ENCODE measurements at regions of chr2 and their contacts with region 1.

Region 1: DNA sequence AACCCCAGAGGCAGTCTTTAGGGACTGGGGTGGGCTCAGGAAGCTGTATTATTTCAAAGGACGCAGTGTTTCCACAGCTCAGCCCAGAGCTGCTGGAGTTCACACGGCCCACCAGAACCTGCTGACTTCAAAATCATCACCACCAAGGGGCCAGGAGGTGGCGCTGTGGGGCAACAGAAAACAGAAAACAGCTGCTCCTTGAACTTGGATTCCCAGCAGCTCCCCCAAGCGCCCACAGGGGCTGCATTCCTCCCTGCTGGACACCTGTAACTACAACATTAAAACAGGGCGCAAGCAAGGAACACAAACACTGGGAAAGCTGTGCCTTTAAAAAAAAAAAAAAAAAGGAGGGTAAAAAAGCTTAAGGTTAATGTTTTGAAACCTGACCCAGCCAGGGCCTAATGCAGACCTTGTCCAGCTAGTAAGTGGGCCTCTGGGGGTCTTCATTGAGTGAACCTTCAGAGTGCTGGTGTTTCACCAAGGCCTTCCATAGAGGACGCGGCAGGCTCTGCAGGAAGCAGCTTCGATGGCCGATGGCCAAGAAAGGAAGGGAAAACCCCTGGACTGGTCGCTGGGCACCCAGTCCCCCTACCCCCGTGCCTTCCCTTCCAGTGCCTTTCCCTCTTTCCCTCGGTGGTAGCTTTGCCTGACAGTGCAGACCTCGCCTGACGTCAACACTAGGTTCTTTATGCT is 25.9 kb downstream of the MLPH start:
- DNase-seq: peak; percentile 87
- H3K4me3 ChIP-seq: no peak overlapping the region
- H3K27ac ChIP-seq: no peak overlapping the region
- H3K4me1 ChIP-seq: peaks cover 9% of the 10 kb centered on the region
- H3K27me3 ChIP-seq: peaks cover 0 to 1% of the 10 kb centered on the region in 2 experiments
- CTCF ChIP-seq: peak; percentile 91 to 92
- POLR2A ChIP-seq: no peak

Region 2: GRCh38 chr2:237154082-237154638 is 358.8 kb before region 1 on chr2:
- CTCF ChIA-PET with region 1: interaction called, 12 read pairs
- POLR2A ChIA-PET with region 1: no interaction called
- dilution Hi-C with region 1: no loop called
- intact Hi-C with region 1: loop called (anchors 1 kb)
- DNase-seq: peak; percentile 59
- H3K4me3 ChIP-seq: no peak overlapping the region
- H3K27ac ChIP-seq: no peak overlapping the region
- H3K4me1 ChIP-seq: peaks cover 8% of the 10 kb centered on the region
- H3K27me3 ChIP-seq: no peaks in the 10 kb centered on the region
- CTCF ChIP-seq: peak; percentile 73 to 75
- POLR2A ChIP-seq: no peak

Region 3: DNA sequence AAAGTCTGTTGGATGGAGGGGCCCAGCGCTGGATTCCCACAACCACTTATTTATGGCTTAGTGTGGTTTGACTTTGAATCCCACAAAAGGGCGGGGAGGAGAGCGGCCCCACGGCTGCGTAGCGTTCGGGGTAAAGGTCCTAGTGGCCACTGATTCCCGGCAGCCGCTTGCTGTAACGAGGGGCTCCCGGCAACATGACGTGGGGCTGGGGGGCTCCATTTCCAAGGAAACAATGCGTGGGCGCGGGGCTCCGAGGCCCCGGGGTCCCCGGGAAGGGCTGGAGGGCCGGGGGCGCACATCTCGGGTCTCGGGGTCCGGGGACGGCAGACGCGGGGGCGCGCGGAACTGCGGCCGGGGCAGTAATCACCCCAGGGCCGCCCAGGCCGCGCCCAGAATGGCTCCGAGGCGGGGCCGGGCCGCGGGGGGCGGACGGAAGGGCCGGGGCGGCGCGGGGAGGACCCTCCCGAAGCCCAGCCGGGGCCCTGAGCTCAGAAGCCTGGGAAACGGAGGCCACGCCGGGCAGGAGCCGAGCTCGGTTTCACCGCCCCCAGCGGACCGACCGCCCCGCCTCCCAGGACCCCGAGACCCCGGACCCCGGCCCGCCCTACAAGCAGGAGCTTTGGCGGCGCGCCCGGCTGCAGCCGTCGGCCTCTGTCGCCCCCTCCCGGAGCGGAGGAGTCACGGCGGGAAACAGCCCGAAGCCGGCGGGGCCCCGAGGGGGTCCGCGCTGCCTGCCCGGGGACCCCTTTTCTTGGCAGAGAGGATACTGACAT is 37.8 kb before region 1 on chr2:
- CTCF ChIA-PET with region 1: interaction called, 78 read pairs
- POLR2A ChIA-PET with region 1: interaction called, 6 read pairs
- dilution Hi-C with region 1: no loop called
- intact Hi-C with region 1: loop called (anchors 1 kb)
- DNase-seq: peak; percentile 54
- H3K4me3 ChIP-seq: peak overlapping the region; percentile 38 to 51 (median 40)
- H3K27ac ChIP-seq: peak overlapping the region; percentile 23
- H3K4me1 ChIP-seq: peaks cover 12% of the 10 kb centered on the region
- H3K27me3 ChIP-seq: peaks cover 36 to 42% of the 10 kb centered on the region in 2 experiments
- CTCF ChIP-seq: peak; percentile 73 to 93
- POLR2A ChIP-seq: peak; percentile 23

Region 4: DNA sequence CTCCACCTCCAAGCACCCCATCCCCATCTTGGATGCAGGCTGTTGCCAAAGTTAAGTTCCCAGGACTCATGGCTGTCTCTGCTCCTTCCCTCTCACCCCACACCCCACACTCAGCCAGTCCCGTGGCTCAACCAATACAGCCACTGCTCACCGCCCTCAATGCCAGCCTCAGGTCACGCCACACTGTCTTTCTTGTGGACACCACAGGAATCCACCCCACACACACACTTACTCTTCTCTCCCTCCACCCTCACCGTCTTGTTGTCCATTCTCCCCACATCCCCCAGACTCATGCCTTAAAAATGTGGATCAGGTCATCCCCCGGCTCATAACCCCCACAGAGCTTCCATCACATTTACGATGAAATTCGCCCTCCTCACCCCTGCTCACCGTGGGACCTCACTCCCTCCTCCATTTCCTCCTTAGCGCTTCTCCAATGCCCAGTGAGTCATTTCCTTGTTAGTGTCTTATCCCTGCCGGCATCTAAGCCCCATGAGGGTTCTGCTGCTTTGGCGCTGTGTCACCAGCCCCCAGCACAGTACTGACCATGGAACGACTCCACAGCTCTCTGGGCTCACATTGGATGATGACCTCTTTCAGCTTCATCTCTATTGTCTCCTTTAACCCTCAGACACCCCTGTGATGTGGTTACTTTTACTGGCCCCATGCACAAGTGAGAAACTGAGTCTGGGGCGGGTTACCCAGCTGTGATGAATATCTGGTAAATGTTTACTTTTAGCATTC is 12.1 kb before region 1 on chr2:
- CTCF ChIA-PET with region 1: interaction called, 50 read pairs
- POLR2A ChIA-PET with region 1: no interaction called
- dilution Hi-C with region 1: no loop called
- intact Hi-C with region 1: no loop called
- DNase-seq: peak; percentile 57
- H3K4me3 ChIP-seq: no peak overlapping the region
- H3K27ac ChIP-seq: no peak overlapping the region
- H3K4me1 ChIP-seq: peaks cover 20% of the 10 kb centered on the region
- H3K27me3 ChIP-seq: peaks cover 3 to 4% of the 10 kb centered on the region in 2 experiments
- CTCF ChIP-seq: no peak
- POLR2A ChIP-seq: no peak

Region 5: GRCh38 chr2:237572021-237572741 is 59.3 kb after region 1 on chr2:
- CTCF ChIA-PET with region 1: interaction called, 295 read pairs
- POLR2A ChIA-PET with region 1: no interaction called
- dilution Hi-C with region 1: no loop called
- intact Hi-C with region 1: loop called (anchors 1 kb)
- DNase-seq: peak; percentile 82
- H3K4me3 ChIP-seq: no peak overlapping the region
- H3K27ac ChIP-seq: no peak overlapping the region
- H3K4me1 ChIP-seq: no peaks in the 10 kb centered on the region
- H3K27me3 ChIP-seq: no peaks in the 10 kb centered on the region
- CTCF ChIP-seq: peak; percentile 99
- POLR2A ChIP-seq: no peak

Region 6: DNA sequence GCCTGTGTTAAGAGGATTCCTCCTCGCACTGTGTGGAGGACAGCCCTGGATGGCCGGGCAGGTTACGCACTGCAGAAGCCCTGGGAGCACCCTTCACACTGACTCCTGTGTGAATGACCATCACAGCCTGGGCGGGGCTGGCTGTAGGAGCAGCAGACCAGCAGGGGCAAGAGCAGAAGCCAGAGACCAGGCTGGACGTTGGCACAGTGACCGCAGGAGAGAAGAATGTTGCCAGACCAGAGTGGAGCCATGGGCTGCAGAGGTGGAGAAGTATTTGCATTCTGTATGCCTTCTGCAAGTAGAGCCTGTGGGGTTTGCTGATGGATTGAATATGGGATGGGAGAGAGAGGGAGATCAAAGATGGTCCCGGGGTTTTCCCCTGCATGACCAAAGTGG is 137.5 kb after region 1 on chr2:
- CTCF ChIA-PET with region 1: no interaction called
- POLR2A ChIA-PET with region 1: no interaction called
- dilution Hi-C with region 1: no loop called
- intact Hi-C with region 1: no loop called
- DNase-seq: no peak
- H3K4me3 ChIP-seq: no peak overlapping the region
- H3K27ac ChIP-seq: no peak overlapping the region
- H3K4me1 ChIP-seq: peaks cover 2% of the 10 kb centered on the region
- H3K27me3 ChIP-seq: no peaks in the 10 kb centered on the region
- CTCF ChIP-seq: no peak
- POLR2A ChIP-seq: no peak

Region 7: GRCh38 chr2:237674731-237675276 is 161.9 kb after region 1 on chr2:
- CTCF ChIA-PET with region 1: interaction called, 14 read pairs
- POLR2A ChIA-PET with region 1: no interaction called
- dilution Hi-C with region 1: no loop called
- intact Hi-C with region 1: loop called (anchors 5 kb)
- DNase-seq: peak; percentile 96
- H3K4me3 ChIP-seq: peak overlapping the region in 2 of 3 experiments; percentile 12 to 16
- H3K27ac ChIP-seq: peak overlapping the region; percentile 96
- H3K4me1 ChIP-seq: peaks cover 56% of the 10 kb centered on the region
- H3K27me3 ChIP-seq: no peaks in the 10 kb centered on the region
- CTCF ChIP-seq: no peak
- POLR2A ChIP-seq: peak; percentile 45

Region 8: GRCh38 chr2:238263204-238264071 is 750.5 kb after region 1 on chr2:
- CTCF ChIA-PET with region 1: interaction called, 9 read pairs
- POLR2A ChIA-PET with region 1: no interaction called
- dilution Hi-C with region 1: no loop called
- intact Hi-C with region 1: loop called (anchors 10 kb)
- DNase-seq: peak; percentile 93
- H3K4me3 ChIP-seq: no peak overlapping the region
- H3K27ac ChIP-seq: no peak overlapping the region
- H3K4me1 ChIP-seq: peaks cover 15% of the 10 kb centered on the region
- H3K27me3 ChIP-seq: no peaks in the 10 kb centered on the region
- CTCF ChIP-seq: peak; percentile 87 to 90
- POLR2A ChIP-seq: no peak

Measured in endothelial cell of umbilical vein (primary cell).